ENCODE measurements at regions of chr5 and their contacts with region 1.

Region 1: GRCh38 chr5:55855509-55855908 is 4.4 kb downstream of the IL31RA start:
- DNase-seq: peak in 7 of 9 donors; percentile 8 to 40 (median 29)
- ATAC-seq: no peak
- H3K4me3 ChIP-seq: no peak overlapping the region
- H3K4me3 Mint-ChIP-seq: peak overlapping the region; percentile 16 to 76 (median 53)
- H3K27ac ChIP-seq: no peak overlapping the region
- H3K27ac Mint-ChIP-seq: peak overlapping the region in 4 of 9 donors; percentile 17 to 74 (median 63)
- H3K4me1 ChIP-seq: peaks cover 14 to 24% of the 10 kb centered on the region in 2 donors
- H3K4me1 Mint-ChIP-seq: peaks cover 17 to 68% (median 29%) of the 10 kb centered on the region in 7 donors
- H3K27me3 ChIP-seq: no peaks in the 10 kb centered on the region
- H3K27me3 Mint-ChIP-seq: peaks cover 0 to 4% (median 0%) of the 10 kb centered on the region in 5 donors

Region 2: DNA sequence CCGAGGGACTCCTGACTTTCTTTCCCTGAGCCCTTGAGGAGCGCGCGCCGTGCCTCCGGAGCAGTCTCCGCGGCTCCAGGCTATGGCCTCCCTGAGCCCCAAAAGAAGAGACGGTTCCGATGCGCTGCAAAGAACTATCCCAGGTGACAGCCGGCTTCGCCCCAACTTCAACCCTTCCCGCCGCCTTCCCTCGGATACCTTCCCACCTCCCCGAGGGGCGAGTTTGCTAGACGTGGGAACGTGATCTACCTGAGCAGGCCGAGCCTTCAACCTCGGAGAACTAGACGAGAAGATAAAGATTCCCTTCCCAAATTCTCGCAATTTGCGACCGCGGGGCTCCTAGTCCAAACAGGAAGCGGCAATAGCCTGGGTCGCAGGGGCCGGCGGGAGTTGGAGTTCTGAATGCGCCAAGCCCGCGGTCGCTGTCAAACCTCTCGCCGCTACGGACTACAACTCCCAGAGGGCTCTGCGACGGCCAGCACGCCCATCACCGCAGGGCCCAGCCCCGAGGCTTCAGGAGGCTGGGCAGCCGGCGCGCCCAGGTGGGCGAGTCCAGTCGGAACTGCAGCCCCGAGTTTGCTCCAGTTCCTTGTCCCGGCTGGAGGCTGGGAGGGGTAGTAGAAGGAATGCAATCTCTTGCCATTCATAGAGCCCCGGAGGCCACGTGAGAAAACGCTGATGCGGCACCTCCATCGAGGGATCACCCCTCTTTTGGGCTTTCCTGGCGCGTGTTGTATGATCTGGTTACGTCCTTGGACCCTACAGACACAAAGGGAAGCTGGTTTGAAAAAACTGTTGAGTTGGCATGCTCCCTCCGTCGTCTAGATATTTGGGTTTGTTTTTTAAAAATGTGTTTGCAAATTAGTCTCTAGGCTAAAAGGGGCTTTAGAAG is 143.3 kb before region 1 on chr5 and contains the start of gene SLC38A9:
- CTCF ChIA-PET with region 1: no interaction called
- POLR2A ChIA-PET with region 1: no interaction called
- intact Hi-C with region 1: loop called in 1 of 2 experiments (anchors 5 kb)
- DNase-seq: peak; percentile 82 to 91 (median 90)
- ATAC-seq: peak; percentile 100
- H3K4me3 ChIP-seq: peak within 1 kb of the TSS; percentile 87
- H3K4me3 Mint-ChIP-seq: peak within 1 kb of the TSS; percentile 94 to 99 (median 98)
- H3K27ac ChIP-seq: peak within 1 kb of the TSS; percentile 72
- H3K27ac Mint-ChIP-seq: peak within 1 kb of the TSS; percentile 76 to 97 (median 91)
- H3K4me1 ChIP-seq: peaks cover 12 to 16% of the 10 kb centered on the region in 2 donors
- H3K4me1 Mint-ChIP-seq: peaks cover 20 to 40% (median 29%) of the 10 kb centered on the region in 7 donors
- H3K27me3 ChIP-seq: no peaks in the 10 kb centered on the region
- H3K27me3 Mint-ChIP-seq: peaks cover 0 to 3% (median 0%) of the 10 kb centered on the region in 5 donors
- total RNA-seq, gene SLC38A9: 17.7 to 32.6 (median 30.4) TPM

Region 3: DNA sequence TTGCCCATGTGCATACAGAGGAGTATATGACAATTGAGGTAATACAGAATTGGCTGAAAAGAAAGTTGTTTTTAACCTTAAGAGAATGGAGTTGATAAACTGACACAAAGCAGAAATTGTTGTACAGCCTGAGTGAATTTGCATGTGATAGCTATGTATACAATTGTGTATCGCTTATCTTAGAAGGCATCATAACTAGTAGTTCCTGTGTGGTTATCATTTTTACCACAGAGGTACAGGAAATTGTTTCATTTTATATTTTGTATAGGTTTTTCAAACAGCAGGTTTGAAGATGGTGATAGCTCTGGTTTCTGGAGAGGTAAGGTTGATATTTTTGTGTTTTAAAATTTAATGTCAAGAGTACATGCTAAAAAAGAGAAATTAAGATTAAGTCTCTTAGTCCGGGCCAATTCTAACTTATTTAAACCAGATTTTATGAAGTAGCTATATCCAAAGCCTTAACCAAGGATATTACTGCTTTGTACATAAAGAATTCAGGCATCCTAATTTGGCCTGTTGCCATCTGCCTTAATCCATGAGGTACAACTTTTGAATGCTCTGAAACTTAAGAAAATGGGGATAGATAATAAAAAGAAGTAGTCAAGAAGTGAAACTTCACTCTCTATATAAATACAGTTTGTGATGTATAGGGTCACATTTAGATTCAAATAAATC is 91.6 kb before region 1 on chr5:
- CTCF ChIA-PET with region 1: no interaction called
- POLR2A ChIA-PET with region 1: no interaction called
- intact Hi-C with region 1: loop called in 1 of 2 experiments (anchors 2 kb)
- DNase-seq: peak in 4 of 9 donors; percentile 2 to 14 (median 8)
- ATAC-seq: peak; percentile 27
- H3K4me3 ChIP-seq: no peak overlapping the region
- H3K4me3 Mint-ChIP-seq: peak overlapping the region in 9 of 10 donors; percentile 1 to 60 (median 15)
- H3K27ac ChIP-seq: no peak overlapping the region
- H3K27ac Mint-ChIP-seq: peak overlapping the region in 1 of 9 donors; percentile 76
- H3K4me1 ChIP-seq: peaks cover 5 to 10% of the 10 kb centered on the region in 2 donors
- H3K4me1 Mint-ChIP-seq: peaks cover 9 to 38% (median 18%) of the 10 kb centered on the region in 7 donors
- H3K27me3 ChIP-seq: peaks cover 0 to 5% of the 10 kb centered on the region in 2 donors
- H3K27me3 Mint-ChIP-seq: peaks cover 4 to 18% (median 10%) of the 10 kb centered on the region in 5 donors

Region 4: GRCh38 chr5:55868846-55869245 is 13.3 kb after region 1 on chr5:
- CTCF ChIA-PET with region 1: no interaction called
- POLR2A ChIA-PET with region 1: no interaction called
- intact Hi-C with region 1: no loop called
- DNase-seq: peak in 1 of 9 donors; percentile 58
- ATAC-seq: peak; percentile 70
- H3K4me3 ChIP-seq: no peak overlapping the region
- H3K4me3 Mint-ChIP-seq: no peak overlapping the region
- H3K27ac ChIP-seq: no peak overlapping the region
- H3K27ac Mint-ChIP-seq: no peak overlapping the region
- H3K4me1 ChIP-seq: no peaks in the 10 kb centered on the region
- H3K4me1 Mint-ChIP-seq: peaks cover 0 to 15% (median 4%) of the 10 kb centered on the region in 7 donors
- H3K27me3 ChIP-seq: no peaks in the 10 kb centered on the region
- H3K27me3 Mint-ChIP-seq: peaks cover 0 to 3% (median 0%) of the 10 kb centered on the region in 5 donors

Region 5: GRCh38 chr5:55903121-55903701 is 47.7 kb after region 1 on chr5:
- CTCF ChIA-PET with region 1: no interaction called
- POLR2A ChIA-PET with region 1: no interaction called
- intact Hi-C with region 1: loop called in 1 of 2 experiments (anchors 5 kb)
- DNase-seq: peak in 3 of 9 donors; percentile 13 to 82 (median 24)
- ATAC-seq: peak; percentile 94
- H3K4me3 ChIP-seq: no peak overlapping the region
- H3K4me3 Mint-ChIP-seq: peak overlapping the region in 6 of 10 donors; percentile 30 to 74 (median 40)
- H3K27ac ChIP-seq: no peak overlapping the region
- H3K27ac Mint-ChIP-seq: peak overlapping the region in 2 of 9 donors; percentile 41 to 74
- H3K4me1 ChIP-seq: peaks cover 7% of the 10 kb centered on the region in 2 donors
- H3K4me1 Mint-ChIP-seq: peaks cover 11 to 52% (median 15%) of the 10 kb centered on the region in 7 donors
- H3K27me3 ChIP-seq: no peaks in the 10 kb centered on the region
- H3K27me3 Mint-ChIP-seq: peaks cover 0 to 3% (median 0%) of the 10 kb centered on the region in 5 donors

Region 6: GRCh38 chr5:56070851-56071465 is 215.4 kb after region 1 on chr5:
- CTCF ChIA-PET with region 1: no interaction called
- POLR2A ChIA-PET with region 1: no interaction called
- intact Hi-C with region 1: no loop called
- DNase-seq: peak in 7 of 9 donors; percentile 46 to 79 (median 69)
- ATAC-seq: peak; percentile 91
- H3K4me3 ChIP-seq: peak overlapping the region; percentile 31
- H3K4me3 Mint-ChIP-seq: peak overlapping the region; percentile 54 to 91 (median 78)
- H3K27ac ChIP-seq: peak overlapping the region; percentile 77
- H3K27ac Mint-ChIP-seq: peak overlapping the region; percentile 65 to 99 (median 91)
- H3K4me1 ChIP-seq: peaks cover 7 to 72% of the 10 kb centered on the region in 2 donors
- H3K4me1 Mint-ChIP-seq: peaks cover 41 to 95% (median 80%) of the 10 kb centered on the region in 7 donors
- H3K27me3 ChIP-seq: no peaks in the 10 kb centered on the region
- H3K27me3 Mint-ChIP-seq: peaks cover 0 to 3% (median 0%) of the 10 kb centered on the region in 5 donors

Region 7: GRCh38 chr5:56522960-56523359 is 667.5 kb after region 1 on chr5:
- CTCF ChIA-PET with region 1: no interaction called
- POLR2A ChIA-PET with region 1: no interaction called
- intact Hi-C with region 1: no loop called
- DNase-seq: no peak
- ATAC-seq: no peak
- H3K4me3 ChIP-seq: no peak overlapping the region
- H3K4me3 Mint-ChIP-seq: no peak overlapping the region
- H3K27ac ChIP-seq: no peak overlapping the region
- H3K27ac Mint-ChIP-seq: no peak overlapping the region
- H3K4me1 ChIP-seq: no peaks in the 10 kb centered on the region
- H3K4me1 Mint-ChIP-seq: peaks cover 3 to 12% (median 6%) of the 10 kb centered on the region in 7 donors
- H3K27me3 ChIP-seq: no peaks in the 10 kb centered on the region
- H3K27me3 Mint-ChIP-seq: peaks cover 0 to under 1% (median 0%) of the 10 kb centered on the region in 5 donors